ENCODE measurements at regions of chr17 and their contacts with region 1.

Region 1: DNA sequence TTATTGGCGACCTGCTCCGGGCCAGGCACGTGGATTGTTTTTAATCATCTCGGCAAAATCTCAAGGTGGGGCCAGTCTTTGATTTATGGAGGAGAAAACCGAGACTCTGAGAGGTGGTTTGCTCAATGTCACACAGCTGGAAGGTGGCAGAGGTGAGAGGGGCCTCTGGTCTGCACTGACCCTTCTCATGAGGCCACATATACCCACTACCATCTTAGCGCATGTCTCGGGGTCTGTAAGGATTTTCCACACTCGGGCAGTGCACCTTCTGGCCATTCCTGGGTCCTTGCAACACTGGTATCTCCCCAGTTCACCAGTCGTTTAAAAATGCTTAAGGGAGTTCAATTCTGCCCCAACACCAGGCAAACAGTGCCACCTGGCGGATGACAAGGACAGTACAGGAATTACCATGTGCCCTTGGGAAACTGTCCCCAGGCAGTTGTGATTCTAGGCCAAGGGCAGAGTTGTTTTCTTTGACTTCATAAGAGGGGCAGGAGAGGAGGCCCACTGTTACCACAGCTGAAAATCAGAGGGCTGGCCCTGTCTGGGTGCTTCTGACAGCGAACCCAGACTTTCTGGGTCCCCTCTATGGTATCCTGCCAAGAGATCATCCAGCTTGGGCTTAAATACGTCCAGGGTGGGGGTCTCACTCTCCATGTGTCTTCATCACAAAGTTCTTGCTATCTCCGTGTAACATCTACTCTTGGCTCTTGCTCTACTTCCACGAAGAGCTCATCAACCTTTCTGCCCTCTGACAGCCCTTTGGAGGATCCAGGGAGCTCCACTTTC is 39.4 kb upstream of the RAI1 start:
- DNase-seq: peak; percentile 74
- CTCF ChIP-seq: peak; percentile 90

Region 2: DNA sequence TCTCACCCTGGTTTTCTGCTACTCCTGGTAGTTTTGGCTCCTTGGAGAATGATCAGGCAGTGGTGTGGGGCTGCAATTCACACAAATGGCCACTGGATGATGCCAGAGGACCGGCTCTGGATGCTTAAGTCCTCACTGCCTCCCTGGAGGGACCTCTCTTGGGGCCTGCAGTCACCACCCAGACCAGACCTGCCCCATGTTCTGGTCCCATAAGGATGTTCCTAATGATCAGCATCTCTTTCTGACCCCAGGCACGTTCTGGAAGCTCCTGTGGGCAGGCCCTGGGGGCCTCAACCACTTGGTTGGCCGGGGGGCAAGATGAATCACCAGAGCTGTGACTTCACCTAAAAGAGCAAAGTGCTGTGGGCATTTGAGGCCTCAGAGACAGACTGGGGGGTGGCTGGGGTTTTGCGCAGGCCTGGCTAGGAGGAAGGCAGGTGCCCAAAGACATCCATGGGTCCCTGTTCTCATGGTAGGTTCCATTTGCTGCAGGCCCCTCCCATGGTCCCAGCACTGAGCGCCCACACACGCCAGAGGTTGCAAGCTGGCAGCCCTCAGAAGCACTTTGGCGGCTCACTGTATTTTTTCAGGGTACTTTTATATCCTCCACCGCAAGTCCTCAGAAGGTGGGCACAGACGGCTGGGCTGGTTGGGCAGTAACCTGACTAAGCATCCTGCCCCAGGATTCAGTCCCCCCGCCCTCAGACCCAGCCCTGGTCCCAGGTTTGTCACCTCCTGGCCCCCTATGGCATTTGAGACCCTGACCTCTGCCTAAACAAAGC is 285.5 kb before region 1 on chr17:
- in situ Hi-C with region 1: loop called (anchors 10 kb)
- DNase-seq: peak; percentile 86
- CTCF ChIP-seq: peak; percentile 98

Region 3: GRCh38 chr17:17819561-17819995 is 177.8 kb after region 1 on chr17:
- in situ Hi-C with region 1: no loop called
- DNase-seq: peak; percentile 93
- CTCF ChIP-seq: no peak

Region 4: DNA sequence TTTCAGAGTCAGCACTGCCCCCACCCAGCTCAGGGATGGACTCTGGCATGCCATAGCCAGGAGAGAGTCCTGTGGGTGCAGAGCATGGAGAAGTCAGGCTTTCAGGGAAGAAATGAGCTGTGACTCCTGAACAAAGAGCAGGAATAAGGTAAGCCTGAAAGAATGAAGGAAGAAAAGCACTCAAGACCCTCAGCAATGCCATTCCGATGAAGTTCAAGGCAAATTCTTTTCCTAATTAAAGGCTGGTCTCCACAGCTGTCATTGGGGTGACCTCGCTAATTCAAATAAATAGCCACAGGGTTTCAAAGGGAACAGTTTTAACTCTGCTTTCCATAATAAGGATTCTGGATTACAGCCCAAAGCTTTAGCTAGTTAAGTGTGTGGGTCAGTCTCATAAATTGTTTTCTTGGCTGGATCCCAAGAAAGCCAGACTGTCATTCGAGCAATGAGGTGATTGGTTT is 298.7 kb after region 1 on chr17:
- in situ Hi-C with region 1: no loop called
- DNase-seq: no peak
- CTCF ChIP-seq: no peak

Measured in GM13977 (cell line).